ENCODE measurements at regions of chr15 and their contacts with region 1.

Region 1: DNA sequence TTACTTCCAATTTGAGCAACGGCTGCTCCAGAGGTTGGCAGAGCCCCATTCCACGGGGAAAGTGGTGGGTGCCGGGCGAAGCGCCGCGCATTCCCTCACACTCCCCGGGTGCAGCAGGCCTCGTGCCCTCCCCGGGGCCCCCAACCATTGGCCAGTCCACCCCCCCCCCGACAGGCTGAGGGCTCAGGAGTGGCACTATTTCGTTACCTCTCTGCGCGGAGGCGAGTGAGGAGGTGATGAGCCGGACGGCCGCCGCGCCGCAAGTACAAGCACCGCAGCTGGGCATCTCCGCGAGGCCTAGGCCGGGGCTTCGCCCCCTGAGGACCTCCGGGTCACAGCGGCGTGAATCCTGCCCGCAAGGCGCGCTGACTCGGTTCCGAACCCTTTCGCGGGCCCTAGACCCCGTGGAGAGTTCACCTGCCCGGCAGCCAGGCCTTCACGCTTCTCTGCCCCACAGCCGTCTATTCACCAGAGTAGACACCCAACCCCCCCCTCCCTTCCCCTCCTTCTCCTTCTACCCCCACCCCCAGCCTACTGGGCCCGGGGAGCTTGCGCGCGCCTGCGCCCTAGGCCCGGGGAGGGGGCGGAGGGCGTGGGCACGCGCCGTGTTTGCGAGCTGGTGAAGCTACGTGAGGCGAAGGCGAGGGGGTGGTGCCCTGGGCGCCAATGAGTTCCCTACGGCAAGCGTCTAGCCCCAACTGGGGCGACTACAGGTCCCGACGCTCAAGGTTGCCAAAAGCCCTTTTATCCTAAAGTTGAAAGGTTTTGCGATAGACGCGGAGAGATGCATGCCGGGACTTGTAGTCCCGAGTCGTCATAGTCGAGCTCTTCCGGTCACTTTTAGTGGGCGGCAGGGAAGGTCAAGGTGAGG is at the start of gene CLPX:
- DNase-seq: peak; percentile 92 to 97 (median 95)
- H3K4me3 ChIP-seq: peak within 1 kb of the TSS; percentile 71 to 77
- H3K4me3 Mint-ChIP-seq: peak within 1 kb of the TSS; percentile 91 to 98 (median 96)
- H3K27ac ChIP-seq: peak within 1 kb of the TSS; percentile 90
- H3K27ac Mint-ChIP-seq: peak within 1 kb of the TSS; percentile 90 to 97 (median 96)
- H3K4me1 ChIP-seq: peaks cover 27% of the 10 kb centered on the region
- H3K4me1 Mint-ChIP-seq: peaks cover 13 to 39% (median 24%) of the 10 kb centered on the region in 4 donors
- H3K27me3 ChIP-seq: no peaks in the 10 kb centered on the region
- H3K27me3 Mint-ChIP-seq: no peaks in the 10 kb centered on the region
- total RNA-seq, gene CLPX: 52.0 to 52.4 TPM

Region 2: GRCh38 chr15:64989416-64990167 is 195.5 kb before region 1 on chr15 and contains the start of gene SPG21:
- CTCF ChIA-PET with region 1: no interaction called
- POLR2A ChIA-PET with region 1: no interaction called
- intact Hi-C with region 1: loop called (anchors 1 kb)
- DNase-seq: peak; percentile 87 to 91 (median 88)
- H3K4me3 ChIP-seq: peak within 1 kb of the TSS; percentile 96 to 99
- H3K4me3 Mint-ChIP-seq: peak within 1 kb of the TSS; percentile 93 to 99 (median 97)
- H3K27ac ChIP-seq: peak within 1 kb of the TSS; percentile 81
- H3K27ac Mint-ChIP-seq: peak within 1 kb of the TSS; percentile 93 to 98 (median 97)
- H3K4me1 ChIP-seq: peaks cover 35% of the 10 kb centered on the region
- H3K4me1 Mint-ChIP-seq: peaks cover 29 to 53% (median 42%) of the 10 kb centered on the region in 4 donors
- H3K27me3 ChIP-seq: no peaks in the 10 kb centered on the region
- H3K27me3 Mint-ChIP-seq: no peaks in the 10 kb centered on the region
- total RNA-seq, gene SPG21: 57.2 to 61.1 TPM

Region 3: DNA sequence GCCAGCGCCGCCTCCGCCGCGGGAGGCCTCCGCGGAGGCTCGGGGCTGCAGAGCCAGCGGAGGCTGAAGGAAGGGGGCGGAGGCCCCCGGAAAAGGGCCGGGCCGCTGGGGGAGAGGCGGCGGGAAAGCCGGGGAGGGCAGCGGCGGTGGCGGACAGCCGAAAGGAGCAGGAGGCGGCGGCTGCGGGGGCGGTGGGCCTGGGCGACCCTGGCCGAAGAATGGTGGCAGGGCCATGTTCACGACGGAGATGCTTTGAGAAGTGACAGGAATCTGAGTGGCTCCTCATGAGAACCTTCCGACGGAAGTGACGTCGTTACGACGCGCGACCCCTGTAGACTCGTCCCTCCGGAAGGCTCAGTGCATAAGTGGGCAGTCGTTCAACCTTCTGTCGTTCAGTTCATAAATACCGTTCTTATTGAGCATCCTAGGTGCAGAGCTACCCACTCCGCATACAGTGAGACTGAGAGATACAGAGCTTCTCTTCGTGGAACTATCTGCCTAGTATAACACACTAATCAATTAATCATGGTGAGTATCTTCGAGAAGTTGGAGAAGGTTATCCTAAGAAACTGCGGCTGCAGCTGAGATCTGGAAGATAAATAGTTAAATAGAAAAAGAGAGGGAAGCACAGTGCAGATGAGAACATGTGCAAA is 51.4 kb before region 1 on chr15 and contains the start of gene PDCD7:
- CTCF ChIA-PET with region 1: no interaction called
- POLR2A ChIA-PET with region 1: interaction called, 13 read pairs
- intact Hi-C with region 1: loop called (anchors 1 kb)
- DNase-seq: peak; percentile 82 to 89 (median 87)
- H3K4me3 ChIP-seq: peak within 1 kb of the TSS; percentile 70 to 91
- H3K4me3 Mint-ChIP-seq: peak within 1 kb of the TSS; percentile 89 to 96 (median 93)
- H3K27ac ChIP-seq: peak within 1 kb of the TSS; percentile 82
- H3K27ac Mint-ChIP-seq: peak within 1 kb of the TSS; percentile 91 to 99 (median 96)
- H3K4me1 ChIP-seq: peaks cover 26% of the 10 kb centered on the region
- H3K4me1 Mint-ChIP-seq: peaks cover 20 to 42% (median 31%) of the 10 kb centered on the region in 4 donors
- H3K27me3 ChIP-seq: no peaks in the 10 kb centered on the region
- H3K27me3 Mint-ChIP-seq: no peaks in the 10 kb centered on the region
- total RNA-seq, gene PDCD7: 30.5 to 40.5 TPM

Region 4: DNA sequence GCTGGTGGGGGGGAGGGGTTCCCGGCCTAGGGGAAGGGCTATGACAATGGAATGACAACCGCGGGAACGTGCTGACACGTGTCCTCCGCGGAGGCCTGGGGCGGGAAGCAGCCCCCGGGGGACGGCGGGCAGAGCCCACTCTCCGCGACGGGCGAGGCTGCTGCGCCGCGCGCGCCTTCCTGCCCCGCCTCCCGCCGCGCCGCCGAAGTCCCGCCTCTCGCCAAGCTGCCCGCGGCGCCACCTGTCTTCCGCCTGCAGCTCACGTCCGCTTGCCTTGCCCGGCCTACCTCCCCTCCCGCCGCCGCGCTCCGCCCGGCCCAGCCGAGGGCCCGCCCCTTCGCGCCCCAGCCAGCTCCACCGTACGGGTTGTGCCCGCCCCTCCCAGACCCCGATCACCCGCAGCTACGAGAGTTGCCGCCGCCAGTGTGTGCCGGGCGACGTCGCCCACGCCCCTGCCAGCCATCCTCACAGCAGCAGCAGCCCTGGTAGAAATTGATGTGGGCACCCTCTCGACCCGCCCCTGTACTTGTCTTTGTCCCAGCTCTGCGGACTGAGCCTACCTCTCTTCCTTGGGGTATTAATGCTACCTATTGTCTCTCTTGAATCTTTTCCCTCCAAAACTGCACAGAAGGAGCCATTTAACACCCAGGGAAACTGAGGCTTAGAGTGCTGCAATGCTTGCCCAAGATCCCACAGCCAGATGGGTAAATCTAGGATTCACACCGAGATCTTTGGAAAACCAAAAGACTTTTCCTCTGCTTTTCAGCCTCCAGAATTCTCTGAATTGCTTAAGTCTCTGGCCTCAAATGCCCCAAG is 101.8 kb after region 1 on chr15 and contains the start of gene PARP16:
- CTCF ChIA-PET with region 1: interaction called, 7 read pairs
- POLR2A ChIA-PET with region 1: interaction called, 45 read pairs
- intact Hi-C with region 1: loop called (anchors 1 kb)
- DNase-seq: peak; percentile 89 to 92 (median 90)
- H3K4me3 ChIP-seq: peak within 1 kb of the TSS; percentile 68 to 78
- H3K4me3 Mint-ChIP-seq: peak within 1 kb of the TSS; percentile 87 to 92 (median 90)
- H3K27ac ChIP-seq: peak within 1 kb of the TSS; percentile 86
- H3K27ac Mint-ChIP-seq: peak within 1 kb of the TSS; percentile 80 to 97 (median 95)
- H3K4me1 ChIP-seq: peaks cover 29% of the 10 kb centered on the region
- H3K4me1 Mint-ChIP-seq: peaks cover 28 to 43% (median 34%) of the 10 kb centered on the region in 4 donors
- H3K27me3 ChIP-seq: no peaks in the 10 kb centered on the region
- H3K27me3 Mint-ChIP-seq: no peaks in the 10 kb centered on the region
- total RNA-seq, gene PARP16: 20.8 to 21.4 TPM

Region 5: GRCh38 chr15:65298731-65299130 is 113.6 kb after region 1 on chr15:
- CTCF ChIA-PET with region 1: interaction called, 12 read pairs
- POLR2A ChIA-PET with region 1: interaction called, 19 read pairs
- intact Hi-C with region 1: loop called (anchors 1 kb)
- DNase-seq: no peak
- H3K4me3 ChIP-seq: peak overlapping the region in 1 of 2 donors; percentile 17
- H3K4me3 Mint-ChIP-seq: peak overlapping the region; percentile 58 to 95 (median 88)
- H3K27ac ChIP-seq: no peak overlapping the region
- H3K27ac Mint-ChIP-seq: peak overlapping the region in 6 of 7 donors; percentile 81 to 97 (median 92)
- H3K4me1 ChIP-seq: peaks cover 53% of the 10 kb centered on the region
- H3K4me1 Mint-ChIP-seq: peaks cover 20 to 49% (median 38%) of the 10 kb centered on the region in 4 donors
- H3K27me3 ChIP-seq: no peaks in the 10 kb centered on the region
- H3K27me3 Mint-ChIP-seq: no peaks in the 10 kb centered on the region

Region 6: DNA sequence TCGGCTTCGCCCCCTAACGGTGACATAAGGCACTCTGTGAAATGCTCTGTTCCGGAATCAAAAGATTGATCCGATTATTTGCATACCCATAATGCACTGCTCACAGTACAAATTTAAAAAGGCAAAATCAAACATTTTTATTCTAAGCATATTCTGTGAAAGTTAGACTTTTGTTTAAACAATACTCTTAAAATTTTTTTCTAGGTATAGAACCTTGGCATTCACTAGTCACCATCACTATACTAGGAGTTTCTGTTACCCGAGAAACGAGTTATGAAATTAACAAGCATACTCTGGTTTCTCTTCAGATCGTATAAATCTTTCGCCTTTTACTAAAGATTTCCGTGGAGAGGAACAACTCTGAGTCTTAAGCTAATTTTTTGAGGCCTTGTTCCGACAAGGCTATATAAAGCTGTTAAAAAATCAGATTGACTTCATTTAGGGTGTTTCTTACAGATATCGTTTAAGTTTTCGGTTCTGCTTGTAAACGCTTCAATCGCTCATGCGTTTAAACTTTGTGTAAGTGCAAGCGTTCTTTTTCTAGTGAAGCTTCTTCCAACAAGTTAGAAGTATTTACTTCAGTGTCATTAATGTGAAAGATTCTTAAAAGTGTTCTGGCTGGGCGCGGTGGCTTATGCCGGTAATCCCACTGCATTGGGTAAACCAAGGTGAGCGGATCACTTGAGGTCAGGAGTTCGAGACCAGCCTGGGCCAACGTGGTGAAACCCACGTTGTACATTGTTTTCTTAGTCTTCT is 119.5 kb after region 1 on chr15 and contains the start of gene RNU5B-1:
- CTCF ChIA-PET with region 1: interaction called, 5 read pairs
- POLR2A ChIA-PET with region 1: interaction called, 25 read pairs
- intact Hi-C with region 1: loop called (anchors 1 kb)
- DNase-seq: peak; percentile 85 to 92 (median 91)
- H3K4me3 ChIP-seq: peak within 1 kb of the TSS; percentile 61 to 73
- H3K4me3 Mint-ChIP-seq: peak within 1 kb of the TSS; percentile 91 to 98 (median 95)
- H3K27ac ChIP-seq: peak within 1 kb of the TSS; percentile 92
- H3K27ac Mint-ChIP-seq: peak within 1 kb of the TSS; percentile 96 to 100 (median 99)
- H3K4me1 ChIP-seq: peaks cover 24% of the 10 kb centered on the region
- H3K4me1 Mint-ChIP-seq: peaks cover 19 to 34% (median 26%) of the 10 kb centered on the region in 4 donors
- H3K27me3 ChIP-seq: no peaks in the 10 kb centered on the region
- H3K27me3 Mint-ChIP-seq: no peaks in the 10 kb centered on the region
- total RNA-seq, gene RNU5B-1: 24.0 TPM in 1 of 2 experiments, not detected in the other

Region 7: GRCh38 chr15:65384895-65385858 is 200.1 kb after region 1 on chr15:
- CTCF ChIA-PET with region 1: no interaction called
- POLR2A ChIA-PET with region 1: no interaction called
- intact Hi-C with region 1: loop called (anchors 1 kb)
- DNase-seq: peak; percentile 78 to 82 (median 78)
- H3K4me3 ChIP-seq: peak overlapping the region; percentile 76 to 78
- H3K4me3 Mint-ChIP-seq: peak overlapping the region; percentile 88 to 97 (median 91)
- H3K27ac ChIP-seq: peak overlapping the region; percentile 46
- H3K27ac Mint-ChIP-seq: peak overlapping the region in 5 of 7 donors; percentile 66 to 90 (median 78)
- H3K4me1 ChIP-seq: peaks cover 11% of the 10 kb centered on the region
- H3K4me1 Mint-ChIP-seq: peaks cover 2 to 17% (median 5%) of the 10 kb centered on the region in 4 donors
- H3K27me3 ChIP-seq: no peaks in the 10 kb centered on the region
- H3K27me3 Mint-ChIP-seq: peaks cover 5 to 10% of the 10 kb centered on the region in 2 donors